Activated T-helper 1 cell treated with anti-CD3 and anti-CD28 coated beads, Interleukin-12 subunit alpha, Interleukin-12 subunit beta, Interleukin-2, Interleukin-4 antibody, amounts not matched to agents 30 ng/mL and 10 ng/mL and 1 ng/mL, durations not matched to agents 14 hours and 24 hours and 36 hours (primary cell): ENCODE measurements at regions of chr7 and their contacts with region 1.

Region 1: GRCh38 chr7:138478499-138478908 is 18.4 kb downstream of the TRIM24 start:
- DNase-seq: no peak
- H3K4me3 Mint-ChIP-seq: no peak overlapping the region
- H3K27ac Mint-ChIP-seq: no peak overlapping the region
- H3K4me1 Mint-ChIP-seq: peaks cover 48% of the 10 kb centered on the region
- H3K27me3 Mint-ChIP-seq: no peaks in the 10 kb centered on the region

Region 2: DNA sequence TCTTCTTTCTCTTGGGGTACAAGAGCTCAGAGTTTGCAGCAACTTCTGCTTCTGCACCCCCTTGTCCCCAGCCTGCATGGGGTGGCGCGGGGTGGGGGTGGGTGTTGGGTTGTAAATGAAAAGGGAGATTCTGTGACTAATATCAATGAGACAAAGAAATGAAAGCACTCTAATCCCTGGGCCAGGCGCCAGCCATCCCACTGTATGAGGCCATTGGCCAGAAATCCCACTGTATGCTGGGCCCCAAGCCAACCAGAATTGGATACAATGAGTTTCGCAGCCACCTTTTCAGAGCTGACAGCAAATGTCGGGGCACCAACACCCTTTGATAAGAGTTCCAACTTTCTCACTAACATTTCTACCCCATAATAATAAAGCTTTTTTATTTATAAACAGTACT is 1124.1 kb before region 1 on chr7:
- intact Hi-C with region 1: no loop called
- DNase-seq: no peak
- H3K4me3 Mint-ChIP-seq: no peak overlapping the region
- H3K27ac Mint-ChIP-seq: no peak overlapping the region
- H3K4me1 Mint-ChIP-seq: no peaks in the 10 kb centered on the region
- H3K27me3 Mint-ChIP-seq: no peaks in the 10 kb centered on the region

Region 3: DNA sequence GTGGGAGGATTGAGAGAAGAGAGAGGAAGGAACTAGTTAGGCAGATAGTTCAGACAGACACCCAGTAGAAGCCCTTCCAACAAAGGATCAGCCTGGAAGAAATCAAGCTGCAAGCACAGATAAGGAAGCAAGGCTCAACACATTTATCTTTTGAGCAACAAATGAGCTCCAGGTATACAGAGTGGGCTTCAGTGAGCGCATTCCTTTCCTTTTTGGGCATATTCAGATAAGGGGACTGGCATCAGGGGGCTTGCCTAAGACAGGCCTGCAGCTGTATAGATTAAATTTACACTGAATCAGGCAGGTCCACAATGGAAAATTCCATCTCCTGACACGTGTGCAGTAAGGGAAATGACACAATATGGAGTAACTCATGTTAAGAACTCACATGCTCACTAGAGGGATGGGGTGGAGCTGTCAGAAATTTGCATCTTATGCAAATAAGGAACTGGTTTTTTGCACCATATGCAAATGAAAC is 255.1 kb before region 1 on chr7:
- intact Hi-C with region 1: no loop called
- DNase-seq: no peak
- H3K4me3 Mint-ChIP-seq: no peak overlapping the region
- H3K27ac Mint-ChIP-seq: no peak overlapping the region
- H3K4me1 Mint-ChIP-seq: no peaks in the 10 kb centered on the region
- H3K27me3 Mint-ChIP-seq: peaks cover 2% of the 10 kb centered on the region

Region 4: DNA sequence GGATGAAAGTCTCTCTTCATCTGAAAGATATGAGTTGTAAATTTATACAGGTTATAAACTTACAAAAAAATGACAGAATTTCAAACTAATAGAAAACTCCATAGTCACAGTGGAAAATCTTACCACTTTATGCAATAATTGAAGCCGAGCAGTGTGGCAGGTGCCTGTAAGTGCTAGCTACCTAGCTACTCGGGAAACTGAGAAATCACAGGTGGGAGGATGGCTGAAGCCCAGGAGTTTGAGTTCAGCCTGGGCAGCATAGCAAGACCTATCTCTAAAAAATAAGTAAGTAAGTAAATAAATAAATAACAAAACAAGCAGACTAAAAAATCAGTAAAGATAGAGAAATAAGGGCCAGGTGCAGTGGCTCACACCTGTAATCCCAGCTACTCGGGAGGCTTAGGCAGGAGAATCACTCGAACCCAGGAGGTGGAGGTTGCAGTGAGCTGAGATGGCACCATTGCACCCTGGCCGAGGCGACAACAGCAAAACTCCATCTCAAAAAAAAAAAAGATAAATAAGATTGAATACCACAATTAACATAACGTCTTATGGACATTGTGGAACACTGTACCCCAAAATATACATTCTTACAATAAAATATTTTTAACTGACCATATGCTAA is 43.4 kb after region 1 on chr7:
- intact Hi-C with region 1: loop called (anchors 5 kb)
- DNase-seq: no peak
- H3K4me3 Mint-ChIP-seq: no peak overlapping the region
- H3K27ac Mint-ChIP-seq: no peak overlapping the region
- H3K4me1 Mint-ChIP-seq: no peaks in the 10 kb centered on the region
- H3K27me3 Mint-ChIP-seq: no peaks in the 10 kb centered on the region

Region 5: GRCh38 chr7:139075031-139075652 is 596.6 kb after region 1 on chr7:
- intact Hi-C with region 1: no loop called
- DNase-seq: peak; percentile 62
- H3K4me3 Mint-ChIP-seq: peak overlapping the region; percentile 15
- H3K27ac Mint-ChIP-seq: peak overlapping the region; percentile 77
- H3K4me1 Mint-ChIP-seq: peaks cover 61% of the 10 kb centered on the region
- H3K27me3 Mint-ChIP-seq: no peaks in the 10 kb centered on the region